SK-N-SH (cell line): ENCODE measurements at regions of chr7 and their contacts with region 1.

Region 1: DNA sequence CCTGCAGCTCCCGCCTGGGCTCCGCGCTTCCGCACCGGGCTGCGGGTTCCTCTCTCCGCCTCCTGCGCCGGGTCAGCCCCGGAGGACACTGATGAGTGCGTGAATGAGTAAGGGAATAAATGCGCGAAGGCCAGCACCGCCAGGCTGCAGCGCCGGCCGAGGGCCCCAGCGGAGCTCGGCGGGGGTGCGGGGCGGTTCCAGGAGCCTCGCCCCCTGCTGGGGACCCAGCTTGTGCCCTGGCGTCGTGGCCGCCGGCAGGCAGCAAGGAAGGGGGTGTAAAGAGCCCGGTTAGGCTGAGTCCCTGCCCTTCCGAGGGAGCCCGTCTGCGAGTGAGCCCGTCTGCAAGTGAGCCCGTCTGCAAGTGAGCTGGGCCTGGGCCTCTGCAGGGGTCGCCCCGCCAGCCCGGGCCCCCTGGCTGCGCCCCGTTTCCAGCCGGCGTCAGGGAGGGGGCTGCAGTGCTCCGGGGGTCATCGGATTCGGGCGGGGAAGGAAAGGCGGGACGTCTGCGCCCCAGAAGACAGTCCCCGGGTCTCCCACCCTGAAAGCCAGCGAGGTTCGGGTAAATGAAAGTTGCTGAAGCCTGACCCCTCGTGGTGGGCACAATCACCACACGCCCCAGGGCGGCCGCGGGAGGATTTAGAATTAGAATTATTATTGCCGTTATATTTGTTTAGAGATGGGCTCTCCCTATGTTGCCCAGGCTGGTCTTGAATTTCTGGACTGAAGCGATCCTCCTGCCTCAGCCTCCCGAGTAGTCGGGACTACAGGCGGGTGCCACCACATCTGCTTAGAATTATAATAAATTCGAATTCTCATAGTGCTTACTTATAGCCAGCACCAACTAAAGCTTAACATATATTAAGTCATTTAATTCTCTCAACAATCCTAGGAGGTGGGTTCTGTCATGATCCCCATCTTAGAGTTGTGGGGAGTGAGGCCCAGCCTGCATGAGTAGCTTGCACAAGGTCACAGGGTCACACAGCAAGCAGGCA is 8.6 kb upstream of the CRYGN start:
- DNase-seq: peak; percentile 91
- H3K4me3 ChIP-seq: peak overlapping the region in 1 of 2 experiments; percentile 45; a peak in 1 of 4 replicates
- H3K27ac ChIP-seq: no peak overlapping the region
- H3K4me1 ChIP-seq: no peaks in the 10 kb centered on the region; a peak in 1 of 4 replicates
- H3K27me3 ChIP-seq: no peaks in the 10 kb centered on the region
- CTCF ChIP-seq: peak; percentile 74
- EP300 ChIP-seq: no peak
- RAD21 ChIP-seq: peak; percentile 78

Region 2: GRCh38 chr7:151368136-151368571 is 80.4 kb before region 1 on chr7:
- CTCF ChIA-PET with region 1: interaction called, 126 read pairs
- POLR2A ChIA-PET with region 1: no interaction called
- DNase-seq: peak; percentile 91
- H3K4me3 ChIP-seq: no peak overlapping the region
- H3K27ac ChIP-seq: no peak overlapping the region
- H3K4me1 ChIP-seq: peaks cover 0 to 13% of the 10 kb centered on the region in 2 experiments; a peak in 2 of 4 replicates
- H3K27me3 ChIP-seq: no peaks in the 10 kb centered on the region
- CTCF ChIP-seq: peak; percentile 99
- EP300 ChIP-seq: no peak
- RAD21 ChIP-seq: peak; percentile 90

Region 3: DNA sequence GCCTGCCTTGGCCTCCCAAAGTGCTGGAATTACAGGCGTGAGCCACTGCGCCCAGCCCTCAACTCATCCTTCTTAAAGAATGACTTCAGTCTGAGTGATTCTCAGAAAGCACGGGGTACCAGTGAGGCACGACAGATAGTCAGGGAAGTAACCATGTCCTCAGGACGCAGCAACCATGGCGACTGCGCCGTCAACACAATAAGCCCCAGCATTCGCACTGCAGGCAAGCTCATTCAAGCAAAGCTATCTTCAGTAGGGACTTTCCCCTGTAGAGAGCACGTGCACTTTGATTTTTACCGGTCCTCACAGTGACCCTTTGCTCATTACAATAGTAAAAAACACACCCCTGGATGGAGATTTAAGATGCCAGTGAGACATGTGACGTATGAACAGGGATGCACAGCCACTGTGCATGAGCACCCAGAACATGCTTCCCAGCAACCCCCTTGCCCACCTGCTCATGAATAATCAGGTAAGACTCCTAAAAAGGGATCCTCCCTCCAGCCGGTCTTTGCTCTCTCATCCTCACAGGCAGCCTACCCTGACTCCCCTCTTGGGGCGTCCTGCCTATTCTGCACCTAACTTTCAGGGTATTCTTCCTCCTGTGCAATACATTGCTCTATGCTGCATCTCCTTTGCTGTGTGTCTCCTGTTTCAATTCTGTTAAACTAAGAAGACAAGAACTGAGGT is 47.8 kb before region 1 on chr7:
- CTCF ChIA-PET with region 1: interaction called, 13 read pairs
- POLR2A ChIA-PET with region 1: no interaction called
- DNase-seq: no peak
- H3K4me3 ChIP-seq: no peak overlapping the region
- H3K27ac ChIP-seq: no peak overlapping the region
- H3K4me1 ChIP-seq: peaks cover 0 to 4% of the 10 kb centered on the region in 2 experiments; a peak in 2 of 4 replicates
- H3K27me3 ChIP-seq: no peaks in the 10 kb centered on the region
- CTCF ChIP-seq: no peak
- EP300 ChIP-seq: no peak
- RAD21 ChIP-seq: no peak

Region 4: DNA sequence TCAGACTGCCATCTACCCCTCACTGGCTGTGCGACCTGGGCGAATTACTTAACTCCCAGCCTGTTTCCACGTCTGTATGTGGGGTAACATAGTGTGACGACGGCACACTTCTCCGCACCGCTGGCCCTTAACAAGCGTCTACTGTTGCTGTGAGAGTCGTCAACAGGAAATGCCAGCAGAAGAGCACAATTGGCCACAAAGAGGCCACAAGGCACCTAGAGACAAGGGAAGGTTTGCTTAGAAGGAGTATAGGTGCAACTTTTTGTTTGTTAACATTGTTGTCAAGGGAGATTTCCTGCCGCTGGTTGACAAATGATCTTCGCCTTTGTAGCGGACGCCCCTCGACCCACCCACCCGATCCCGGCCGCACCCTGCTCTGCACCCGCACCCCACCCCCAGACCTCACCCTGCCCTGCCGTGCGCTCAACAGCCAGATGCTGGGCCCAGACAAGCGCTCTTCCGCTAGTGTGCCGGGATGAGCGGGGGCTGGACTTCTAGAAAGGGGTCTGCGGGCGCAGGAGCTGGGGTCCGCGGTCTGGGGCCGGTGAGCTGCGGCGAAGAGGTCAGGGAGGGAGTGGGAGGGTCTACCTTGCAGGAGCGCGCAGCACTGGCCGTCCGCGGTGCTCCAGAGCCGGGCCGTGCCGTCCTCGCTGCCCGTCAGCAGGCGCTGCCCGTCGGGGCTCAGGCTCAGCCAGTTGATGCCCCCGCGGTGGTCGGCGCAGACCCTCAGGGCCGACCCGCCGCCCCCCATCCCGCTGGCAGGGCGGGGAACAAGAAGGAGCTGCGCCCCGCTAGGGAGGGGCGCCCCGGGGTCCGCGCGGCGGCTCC is 39.5 kb before region 1 on chr7:
- CTCF ChIA-PET with region 1: interaction called, 10 read pairs
- POLR2A ChIA-PET with region 1: no interaction called
- DNase-seq: peak; percentile 87
- H3K4me3 ChIP-seq: peak overlapping the region; percentile 59 to 61; a peak in 3 of 4 replicates
- H3K27ac ChIP-seq: peak overlapping the region in 1 of 2 experiments; percentile 85; a peak in 1 of 4 replicates
- H3K4me1 ChIP-seq: peaks cover 0 to 21% of the 10 kb centered on the region in 2 experiments; a peak in 2 of 4 replicates
- H3K27me3 ChIP-seq: peaks cover 59% of the 10 kb centered on the region
- CTCF ChIP-seq: no peak
- EP300 ChIP-seq: no peak
- RAD21 ChIP-seq: peak; percentile 49

Region 5: GRCh38 chr7:151459726-151460473 is 11.3 kb after region 1 on chr7:
- CTCF ChIA-PET with region 1: interaction called, 10 read pairs
- POLR2A ChIA-PET with region 1: no interaction called
- DNase-seq: peak; percentile 77
- H3K4me3 ChIP-seq: peak overlapping the region; percentile 23 to 42; a peak in 3 of 4 replicates
- H3K27ac ChIP-seq: peak overlapping the region; percentile 44 to 54; a peak in 3 of 4 replicates
- H3K4me1 ChIP-seq: peaks cover 0 to 14% of the 10 kb centered on the region in 2 experiments; a peak in 1 of 4 replicates
- H3K27me3 ChIP-seq: no peaks in the 10 kb centered on the region
- CTCF ChIP-seq: peak; percentile 44
- EP300 ChIP-seq: peak in 1 of 2 experiments; percentile 31; a peak in 1 of 4 replicates
- RAD21 ChIP-seq: peak; percentile 53

Region 6: DNA sequence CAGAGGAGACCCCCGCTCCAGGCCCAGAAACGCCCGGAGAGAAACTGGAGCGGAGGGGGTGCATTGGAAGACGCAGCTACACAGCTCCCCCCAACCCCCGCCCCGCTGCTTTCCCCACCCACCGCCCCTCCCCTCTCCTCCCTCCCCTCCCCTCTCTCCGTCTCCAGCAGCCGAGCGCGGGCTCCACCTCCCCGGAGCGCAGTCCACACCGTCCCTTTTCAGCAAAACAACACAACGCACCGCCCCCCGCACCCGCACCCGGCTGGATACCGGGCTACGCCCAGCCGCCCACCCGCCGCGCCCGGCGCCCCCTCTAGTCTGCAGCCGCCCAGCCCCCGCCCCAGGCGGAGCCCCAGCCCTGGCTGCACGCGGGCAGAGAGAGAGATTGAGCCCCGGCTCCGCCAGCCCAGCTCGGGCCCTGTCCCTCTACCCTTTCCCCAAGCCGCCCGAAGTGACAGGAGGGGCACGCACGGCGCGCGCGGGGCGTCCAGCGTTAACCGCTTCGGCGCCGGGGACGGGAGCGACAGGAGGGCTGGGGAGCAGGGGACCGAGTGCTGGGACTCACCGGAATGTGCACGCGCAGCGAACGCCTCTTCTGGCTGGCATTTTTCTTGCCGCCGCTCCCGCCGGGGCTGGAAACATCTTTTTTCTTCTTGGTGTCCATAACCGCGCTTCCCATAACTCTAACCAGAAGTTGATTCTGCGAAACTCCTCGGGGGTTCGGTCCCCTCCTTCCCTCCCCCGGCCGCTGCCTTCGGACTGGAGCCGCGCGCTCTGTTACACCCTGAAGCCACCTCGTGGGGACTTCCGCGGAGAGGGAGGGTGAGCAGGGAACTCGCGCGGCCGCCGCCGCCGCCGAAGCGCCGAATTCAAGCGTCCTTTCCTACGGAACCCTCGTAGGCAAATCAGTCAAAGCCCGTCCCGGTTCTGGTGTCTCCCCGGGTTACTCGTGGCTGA is 427.7 kb after region 1 on chr7:
- CTCF ChIA-PET with region 1: no interaction called
- POLR2A ChIA-PET with region 1: no interaction called
- DNase-seq: peak; percentile 97
- H3K4me3 ChIP-seq: peak overlapping the region; percentile 64 to 80
- H3K27ac ChIP-seq: peak overlapping the region in 1 of 2 experiments; percentile 80; a peak in 2 of 4 replicates
- H3K4me1 ChIP-seq: peaks cover 0 to 15% of the 10 kb centered on the region in 2 experiments; a peak in 2 of 4 replicates
- H3K27me3 ChIP-seq: peaks cover 63% of the 10 kb centered on the region
- CTCF ChIP-seq: no peak
- EP300 ChIP-seq: no peak
- RAD21 ChIP-seq: no peak